ENCODE measurements at regions of chr1 and their contacts with region 1.

Region 1: GRCh38 chr1:236103646-236104218 is 38.6 kb upstream of the GPR137B start:
- DNase-seq: peak; percentile 77 to 86 (median 81)
- ATAC-seq: peak; percentile 85
- H3K4me3 ChIP-seq: no peak overlapping the region
- H3K27ac ChIP-seq: no peak overlapping the region
- H3K4me1 ChIP-seq: peaks cover 3% of the 10 kb centered on the region in 2 experiments; a peak in 3 of 5 replicates
- H3K27me3 ChIP-seq: peaks cover 0 to 30% of the 10 kb centered on the region in 2 experiments; a peak in 2 of 5 replicates
- CTCF ChIP-seq: peak; percentile 73 to 97 (median 89)
- EP300 ChIP-seq: no peak
- POLR2A ChIP-seq: no peak
- RAD21 ChIP-seq: peak; percentile 95 to 97

Region 2: GRCh38 chr1:235295902-235296376 is 807.8 kb before region 1 on chr1:
- CTCF ChIA-PET with region 1: no interaction called
- POLR2A ChIA-PET with region 1: no interaction called
- in situ Hi-C with region 1: no loop called
- intact Hi-C with region 1: no loop called
- DNase-seq: peak in 1 of 4 experiments; percentile 51
- ATAC-seq: peak; percentile 7
- H3K4me3 ChIP-seq: no peak overlapping the region
- H3K27ac ChIP-seq: peak overlapping the region; percentile 54
- H3K4me1 ChIP-seq: peaks cover 17 to 37% of the 10 kb centered on the region in 2 experiments
- H3K27me3 ChIP-seq: no peaks in the 10 kb centered on the region
- CTCF ChIP-seq: no peak
- EP300 ChIP-seq: no peak
- POLR2A ChIP-seq: no peak
- RAD21 ChIP-seq: no peak

Region 3: GRCh38 chr1:236303687-236304086 is 200.0 kb after region 1 on chr1:
- CTCF ChIA-PET with region 1: no interaction called
- POLR2A ChIA-PET with region 1: no interaction called
- in situ Hi-C with region 1: no loop called
- intact Hi-C with region 1: loop called (anchors 2 kb)
- DNase-seq: peak in 2 of 4 experiments; percentile 32 to 43
- ATAC-seq: peak; percentile 90
- H3K4me3 ChIP-seq: no peak overlapping the region
- H3K27ac ChIP-seq: no peak overlapping the region
- H3K4me1 ChIP-seq: peaks cover 0 to 3% of the 10 kb centered on the region in 2 experiments; a peak in 1 of 5 replicates
- H3K27me3 ChIP-seq: no peaks in the 10 kb centered on the region
- CTCF ChIP-seq: peak; percentile 47 to 64 (median 59)
- EP300 ChIP-seq: no peak
- POLR2A ChIP-seq: no peak
- RAD21 ChIP-seq: peak; percentile 32 to 81; a peak in 3 of 4 replicates

Region 4: GRCh38 chr1:236489710-236490377 is 386.1 kb after region 1 on chr1:
- CTCF ChIA-PET with region 1: interaction called, 27 read pairs
- POLR2A ChIA-PET with region 1: interaction called, 3 read pairs
- in situ Hi-C with region 1: no loop called
- intact Hi-C with region 1: loop called (anchors 1 kb)
- DNase-seq: peak; percentile 62 to 77 (median 64)
- ATAC-seq: peak; percentile 85
- H3K4me3 ChIP-seq: no peak overlapping the region
- H3K27ac ChIP-seq: no peak overlapping the region
- H3K4me1 ChIP-seq: peaks cover 0 to 6% of the 10 kb centered on the region in 2 experiments; a peak in 3 of 5 replicates
- H3K27me3 ChIP-seq: peaks cover 9 to 15% of the 10 kb centered on the region in 2 experiments; a peak in 4 of 5 replicates
- CTCF ChIP-seq: peak; percentile 54 to 74 (median 70)
- EP300 ChIP-seq: no peak
- POLR2A ChIP-seq: no peak
- RAD21 ChIP-seq: peak; percentile 78 to 88

Region 5: GRCh38 chr1:236753516-236753915 is 649.8 kb after region 1 on chr1:
- CTCF ChIA-PET with region 1: no interaction called
- POLR2A ChIA-PET with region 1: no interaction called
- in situ Hi-C with region 1: no loop called
- intact Hi-C with region 1: loop called (anchors 5 kb)
- DNase-seq: peak; percentile 33 to 64 (median 44)
- ATAC-seq: peak; percentile 93
- H3K4me3 ChIP-seq: no peak overlapping the region
- H3K27ac ChIP-seq: no peak overlapping the region
- H3K4me1 ChIP-seq: peaks cover 10 to 13% of the 10 kb centered on the region in 2 experiments
- H3K27me3 ChIP-seq: peaks cover 0 to 16% of the 10 kb centered on the region in 2 experiments; a peak in 4 of 5 replicates
- CTCF ChIP-seq: peak; percentile 62 to 71 (median 63)
- EP300 ChIP-seq: no peak
- POLR2A ChIP-seq: no peak
- RAD21 ChIP-seq: peak; percentile 68 to 76

Region 6: GRCh38 chr1:237124856-237125462 is 1021.2 kb after region 1 on chr1:
- CTCF ChIA-PET with region 1: no interaction called
- POLR2A ChIA-PET with region 1: no interaction called
- in situ Hi-C with region 1: no loop called
- intact Hi-C with region 1: loop called (anchors 10 kb)
- DNase-seq: peak; percentile 28 to 50 (median 32)
- ATAC-seq: peak; percentile 84
- H3K4me3 ChIP-seq: no peak overlapping the region
- H3K27ac ChIP-seq: no peak overlapping the region
- H3K4me1 ChIP-seq: no peaks in the 10 kb centered on the region
- H3K27me3 ChIP-seq: no peaks in the 10 kb centered on the region
- CTCF ChIP-seq: peak; percentile 51 to 77 (median 72)
- EP300 ChIP-seq: no peak
- POLR2A ChIP-seq: no peak
- RAD21 ChIP-seq: peak in 1 of 2 experiments; percentile 58; a peak in 3 of 4 replicates

Region 7: GRCh38 chr1:237562242-237562823 is 1458.6 kb after region 1 on chr1:
- CTCF ChIA-PET with region 1: no interaction called
- POLR2A ChIA-PET with region 1: no interaction called
- in situ Hi-C with region 1: loop called (anchors 25 kb)
- intact Hi-C with region 1: loop called (anchors 2 kb)
- DNase-seq: peak; percentile 35 to 75 (median 62)
- ATAC-seq: peak; percentile 93
- H3K4me3 ChIP-seq: no peak overlapping the region
- H3K27ac ChIP-seq: no peak overlapping the region
- H3K4me1 ChIP-seq: no peaks in the 10 kb centered on the region
- H3K27me3 ChIP-seq: no peaks in the 10 kb centered on the region
- CTCF ChIP-seq: peak; percentile 29 to 63 (median 58); a peak in 5 of 6 replicates
- EP300 ChIP-seq: no peak
- POLR2A ChIP-seq: no peak
- RAD21 ChIP-seq: peak; percentile 62 to 66

Measured in K562 (cell line).